HCT116 (cell line): ENCODE measurements at regions of chr3 and their contacts with region 1.

Region 1: DNA sequence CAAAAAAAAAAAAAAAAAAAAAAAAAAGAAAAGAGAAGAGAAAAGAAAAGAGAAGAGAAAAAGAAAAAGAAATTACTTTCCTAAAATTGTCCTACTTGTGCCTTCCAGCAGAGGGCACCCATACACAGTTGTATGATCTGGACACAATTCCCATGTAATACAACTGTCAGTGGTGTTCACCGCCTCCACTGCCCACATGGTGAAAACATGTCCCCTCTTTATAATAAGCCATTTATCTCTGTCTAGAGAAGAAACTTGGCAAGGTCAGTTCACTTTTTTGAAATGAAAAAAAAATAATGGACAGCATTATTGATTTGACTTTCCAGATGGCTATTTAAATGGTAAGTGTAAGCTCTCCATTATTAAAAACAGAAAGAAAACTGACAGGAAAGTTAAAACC is 459.4 kb downstream of the GBE1 start:
- DNase-seq: peak; percentile 13
- ATAC-seq: no peak
- H3K4me3 ChIP-seq: no peak overlapping the region
- H3K27ac ChIP-seq: no peak overlapping the region
- H3K4me1 ChIP-seq: no peaks in the 10 kb centered on the region
- H3K27me3 ChIP-seq: no peaks in the 10 kb centered on the region
- CTCF ChIP-seq: peak in 2 of 3 experiments; percentile 57 to 69; a peak in 4 of 6 replicates
- POLR2A ChIP-seq: no peak
- RAD21 ChIP-seq: peak; percentile 40; the same call in 1 of the 2 replicates

Region 2: GRCh38 chr3:81338676-81339555 is 36.9 kb after region 1 on chr3:
- CTCF ChIA-PET with region 1: no interaction called
- POLR2A ChIA-PET with region 1: no interaction called
- RAD21 ChIA-PET with region 1: no interaction called
- intact Hi-C with region 1: loop called (anchors 1 kb)
- DNase-seq: no peak
- ATAC-seq: peak; percentile 65
- H3K4me3 ChIP-seq: no peak overlapping the region
- H3K27ac ChIP-seq: no peak overlapping the region
- H3K4me1 ChIP-seq: no peaks in the 10 kb centered on the region
- H3K27me3 ChIP-seq: no peaks in the 10 kb centered on the region
- CTCF ChIP-seq: peak in 2 of 3 experiments; percentile 35 to 60; a peak in 2 of 6 replicates
- POLR2A ChIP-seq: no peak
- RAD21 ChIP-seq: peak; percentile 20; the same call in 1 of the 2 replicates